Sigmoid colon (tissue), 7 donors: ENCODE measurements at regions of chr1 and their contacts with region 1.

Region 1: DNA sequence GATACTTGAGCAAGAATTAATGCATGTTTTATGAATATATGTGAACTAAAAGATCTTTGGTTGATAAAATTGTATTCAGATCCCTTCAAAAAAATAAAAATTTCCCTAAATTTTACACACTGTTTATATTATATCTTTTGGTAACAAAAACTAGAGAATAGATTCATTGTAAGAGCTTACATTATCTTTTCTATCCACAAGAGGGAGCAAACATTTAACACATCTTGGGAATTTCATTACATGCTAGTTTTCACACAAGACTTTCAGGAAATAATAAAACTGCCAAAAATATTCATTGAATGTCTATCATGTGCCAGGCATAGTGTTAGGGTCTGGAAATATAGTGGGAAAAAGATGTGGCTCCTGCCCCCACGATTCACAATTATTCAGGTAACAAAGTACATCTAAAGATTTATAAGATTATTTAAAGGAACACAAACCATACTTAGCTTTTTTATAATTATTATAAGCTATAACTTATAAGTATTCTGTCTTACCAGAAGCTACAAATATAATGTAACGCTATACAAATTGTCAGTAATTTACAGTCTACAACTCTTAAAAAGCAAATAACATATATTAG is 30.6 kb downstream of the FAF1 start:
- DNase-seq: no peak
- H3K4me3 ChIP-seq: no peak overlapping the region
- H3K27ac ChIP-seq: no peak overlapping the region
- H3K4me1 ChIP-seq: peaks cover 0 to 9% (median 0%) of the 10 kb centered on the region in 4 donors
- H3K27me3 ChIP-seq: no peaks in the 10 kb centered on the region
- CTCF ChIP-seq: peak; percentile 7 to 56 (median 43)
- EP300 ChIP-seq: no peak
- POLR2A ChIP-seq: no peak

Region 2: DNA sequence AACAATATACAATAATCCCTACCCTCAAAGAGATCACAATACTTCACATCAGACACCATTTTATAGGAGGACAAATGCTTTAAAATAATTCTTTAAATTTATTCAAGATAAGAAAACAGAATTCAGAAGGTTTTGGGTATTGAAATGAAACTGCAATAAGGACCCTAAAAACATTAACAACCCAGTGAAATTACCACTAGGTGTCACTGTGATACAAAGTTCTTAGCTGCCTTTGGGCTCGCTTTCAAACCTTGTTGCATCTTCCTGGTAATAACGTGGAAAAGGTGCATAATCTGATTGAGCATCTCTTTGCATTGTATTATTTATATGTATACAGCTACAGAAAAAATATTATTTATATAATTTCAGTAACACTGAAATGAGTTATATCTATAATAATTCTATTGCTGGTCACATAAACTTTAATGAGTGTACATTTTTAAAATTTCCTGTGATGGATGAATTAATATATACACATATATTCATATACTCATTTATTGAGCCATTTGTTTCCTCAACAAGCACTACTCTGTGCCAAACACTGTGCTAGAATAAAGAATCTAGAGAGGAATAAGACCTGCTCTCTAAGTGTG is 154.6 kb before region 1 on chr1:
- intact Hi-C with region 1: loop called (anchors 5 kb)
- DNase-seq: no peak
- H3K4me3 ChIP-seq: no peak overlapping the region
- H3K27ac ChIP-seq: no peak overlapping the region
- H3K4me1 ChIP-seq: no peaks in the 10 kb centered on the region
- H3K27me3 ChIP-seq: no peaks in the 10 kb centered on the region
- CTCF ChIP-seq: peak; percentile 22 to 74 (median 63)
- EP300 ChIP-seq: no peak
- POLR2A ChIP-seq: no peak

Region 3: GRCh38 chr1:50959913-50960844 is 30.7 kb after region 1 on chr1 and contains the start of gene FAF1:
- intact Hi-C with region 1: loop called (anchors 5 kb)
- DNase-seq: peak; percentile 98
- H3K4me3 ChIP-seq: peak within 1 kb of the TSS; percentile 69 to 80 (median 72)
- H3K27ac ChIP-seq: peak within 1 kb of the TSS; percentile 83 to 91 (median 88)
- H3K4me1 ChIP-seq: peaks cover 0 to 20% (median 17%) of the 10 kb centered on the region in 4 donors
- H3K27me3 ChIP-seq: no peaks in the 10 kb centered on the region
- CTCF ChIP-seq: peak in 3 of 4 experiments; percentile 23 to 40 (median 28)
- EP300 ChIP-seq: peak in 1 of 4 donors; percentile 67
- POLR2A ChIP-seq: peak; percentile 93 to 94
- total RNA-seq, gene FAF1: 53.9 to 59.3 (median 55.6) TPM

Region 4: GRCh38 chr1:51044834-51045233 is 115.4 kb after region 1 on chr1:
- intact Hi-C with region 1: loop called (anchors 5 kb)
- DNase-seq: no peak
- H3K4me3 ChIP-seq: no peak overlapping the region
- H3K27ac ChIP-seq: no peak overlapping the region
- H3K4me1 ChIP-seq: peaks cover 0 to 5% (median 0%) of the 10 kb centered on the region in 4 donors
- H3K27me3 ChIP-seq: no peaks in the 10 kb centered on the region
- CTCF ChIP-seq: peak in 1 of 4 experiments; percentile 30
- EP300 ChIP-seq: no peak
- POLR2A ChIP-seq: no peak